Tibial artery (tissue), 4 donors: ENCODE measurements at regions of chrX and their contacts with region 1.

Region 1: GRCh38 chrX:66176134-66176533 is 12.1 kb downstream of the HEPH start:
- DNase-seq: no peak
- H3K4me3 ChIP-seq: no peak overlapping the region
- H3K27ac ChIP-seq: no peak overlapping the region
- H3K4me1 ChIP-seq: no peaks in the 10 kb centered on the region
- H3K27me3 ChIP-seq: no peaks in the 10 kb centered on the region
- CTCF ChIP-seq: no peak

Region 2: DNA sequence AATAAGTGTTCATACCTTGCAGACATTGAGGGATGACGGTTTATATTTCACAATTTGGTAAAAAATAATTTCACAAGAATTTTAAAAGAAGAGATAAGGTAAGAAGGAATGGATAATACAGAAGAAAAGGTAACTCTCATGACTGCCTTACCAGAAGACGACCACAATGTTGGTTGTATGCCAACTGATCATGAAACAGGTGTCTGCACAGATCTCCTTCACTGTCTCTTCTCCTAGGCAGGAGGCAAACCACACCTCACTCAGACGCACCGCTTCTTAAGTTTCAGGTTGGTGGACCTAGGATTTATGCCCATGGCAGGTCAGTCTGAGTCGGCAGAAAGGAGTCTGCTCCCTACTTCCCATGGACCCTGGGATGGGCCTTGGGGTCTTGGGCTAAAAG is 313.5 kb before region 1 on chrX:
- intact Hi-C with region 1: no loop called
- DNase-seq: no peak
- H3K4me3 ChIP-seq: no peak overlapping the region
- H3K27ac ChIP-seq: no peak overlapping the region
- H3K4me1 ChIP-seq: no peaks in the 10 kb centered on the region
- H3K27me3 ChIP-seq: no peaks in the 10 kb centered on the region
- CTCF ChIP-seq: no peak

Region 3: GRCh38 chrX:66262807-66263206 is 86.7 kb after region 1 on chrX:
- intact Hi-C with region 1: no loop called
- DNase-seq: no peak
- H3K4me3 ChIP-seq: no peak overlapping the region
- H3K27ac ChIP-seq: no peak overlapping the region
- H3K4me1 ChIP-seq: no peaks in the 10 kb centered on the region
- H3K27me3 ChIP-seq: no peaks in the 10 kb centered on the region
- CTCF ChIP-seq: no peak

Region 4: DNA sequence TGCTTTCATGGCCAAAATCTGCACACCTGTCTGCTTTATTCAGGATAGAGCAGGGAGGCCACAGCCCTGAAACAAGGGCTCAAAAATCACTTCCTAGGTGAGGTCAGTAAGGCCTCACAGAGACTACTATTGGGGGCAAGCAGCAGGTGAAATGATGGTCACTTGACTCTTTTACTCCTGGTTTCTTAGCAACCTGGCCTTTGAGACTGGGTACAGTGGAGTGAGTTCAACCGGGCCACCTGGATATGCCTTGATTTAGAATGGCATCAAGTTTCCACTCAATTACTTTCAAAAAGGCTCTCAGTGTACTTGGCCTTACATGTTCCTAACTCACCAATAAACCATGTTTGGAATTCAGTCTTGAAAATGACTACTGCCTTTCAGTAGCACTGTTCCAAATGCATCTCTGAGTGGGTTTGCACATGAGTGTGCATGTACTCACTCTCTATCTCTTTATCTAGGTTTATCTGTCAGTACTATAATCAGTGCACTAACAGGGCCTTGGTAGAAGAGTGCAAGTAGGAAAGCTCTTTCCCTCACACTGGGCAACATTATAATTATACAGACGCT is 1869.0 kb after region 1 on chrX:
- intact Hi-C with region 1: loop called (anchors 5 kb)
- DNase-seq: no peak
- H3K4me3 ChIP-seq: no peak overlapping the region
- H3K27ac ChIP-seq: no peak overlapping the region
- H3K4me1 ChIP-seq: no peaks in the 10 kb centered on the region
- H3K27me3 ChIP-seq: no peaks in the 10 kb centered on the region
- CTCF ChIP-seq: no peak